Activated B cell treated with CpG ODN at 0.5 μM for 24 hours (primary cell): ENCODE measurements at regions of chr17 and their contacts with region 1.

Region 1: DNA sequence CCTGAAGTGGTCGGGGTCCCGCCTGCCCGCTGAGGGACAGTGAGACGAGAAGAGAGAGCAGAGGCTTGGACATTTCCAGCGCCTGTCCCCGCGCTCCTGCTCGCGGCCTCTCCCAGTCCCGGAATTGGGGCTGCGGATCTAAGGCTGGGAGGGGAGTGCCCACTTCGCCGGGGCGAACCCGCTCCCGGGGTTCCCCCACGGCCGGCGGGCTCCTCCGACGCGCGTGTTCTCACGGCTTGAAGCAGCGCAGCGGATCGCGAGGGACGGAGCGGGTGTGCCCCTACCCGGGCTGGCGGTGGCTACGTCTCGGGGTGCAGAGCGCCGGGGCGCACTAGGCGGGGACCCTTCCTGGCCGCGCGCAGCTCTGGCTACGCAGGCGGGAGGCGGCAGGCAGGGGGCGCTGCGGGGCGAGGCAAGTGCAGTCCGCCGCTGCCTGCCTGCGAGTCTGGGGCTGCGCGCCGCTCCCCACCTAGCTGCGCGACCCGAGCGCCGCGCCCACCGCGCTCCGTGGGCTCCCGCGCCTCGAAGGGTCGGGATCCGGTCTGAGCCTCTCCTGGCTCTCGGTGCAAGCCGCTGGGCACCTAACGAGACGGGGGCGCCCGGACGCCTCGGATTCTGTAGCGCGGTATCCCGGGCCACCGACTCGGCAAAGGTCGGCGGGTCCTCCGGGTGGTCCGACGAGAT is 1.2 kb downstream of the NGFR start:
- DNase-seq: peak; percentile 86
- ATAC-seq: peak; percentile 73
- H3K4me3 Mint-ChIP-seq: peak overlapping the region; percentile 81
- H3K27ac Mint-ChIP-seq: no peak overlapping the region
- H3K4me1 Mint-ChIP-seq: peaks cover 34% of the 10 kb centered on the region
- H3K27me3 Mint-ChIP-seq: peaks cover 33% of the 10 kb centered on the region
- CTCF ChIP-seq: peak; percentile 22

Region 2: DNA sequence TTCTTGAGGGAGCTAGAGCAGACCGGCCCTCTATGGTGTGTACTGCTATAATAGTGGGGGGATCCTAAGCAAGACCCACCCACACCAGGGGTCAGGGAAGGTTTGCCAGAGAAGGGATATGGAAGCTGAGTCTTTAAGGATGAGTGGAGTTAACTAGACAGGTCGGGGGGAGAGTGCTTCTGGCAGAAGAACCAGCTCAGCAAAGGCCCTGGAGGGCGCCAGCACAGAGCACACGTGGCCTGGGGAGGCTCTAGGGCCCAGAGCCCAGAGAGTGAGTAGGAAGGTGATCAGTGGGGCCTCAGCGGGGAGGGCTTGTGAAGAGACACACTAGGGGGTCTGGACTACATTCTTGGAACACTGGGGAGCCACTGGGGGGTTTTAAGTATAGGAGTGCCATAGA is 19.9 kb after region 1 on chr17:
- CTCF ChIA-PET with region 1: no interaction called
- POLR2A ChIA-PET with region 1: no interaction called
- intact Hi-C with region 1: no loop called
- DNase-seq: no peak
- ATAC-seq: no peak
- H3K4me3 Mint-ChIP-seq: no peak overlapping the region
- H3K27ac Mint-ChIP-seq: no peak overlapping the region
- H3K4me1 Mint-ChIP-seq: no peaks in the 10 kb centered on the region
- H3K27me3 Mint-ChIP-seq: peaks cover 7% of the 10 kb centered on the region
- CTCF ChIP-seq: no peak

Region 3: DNA sequence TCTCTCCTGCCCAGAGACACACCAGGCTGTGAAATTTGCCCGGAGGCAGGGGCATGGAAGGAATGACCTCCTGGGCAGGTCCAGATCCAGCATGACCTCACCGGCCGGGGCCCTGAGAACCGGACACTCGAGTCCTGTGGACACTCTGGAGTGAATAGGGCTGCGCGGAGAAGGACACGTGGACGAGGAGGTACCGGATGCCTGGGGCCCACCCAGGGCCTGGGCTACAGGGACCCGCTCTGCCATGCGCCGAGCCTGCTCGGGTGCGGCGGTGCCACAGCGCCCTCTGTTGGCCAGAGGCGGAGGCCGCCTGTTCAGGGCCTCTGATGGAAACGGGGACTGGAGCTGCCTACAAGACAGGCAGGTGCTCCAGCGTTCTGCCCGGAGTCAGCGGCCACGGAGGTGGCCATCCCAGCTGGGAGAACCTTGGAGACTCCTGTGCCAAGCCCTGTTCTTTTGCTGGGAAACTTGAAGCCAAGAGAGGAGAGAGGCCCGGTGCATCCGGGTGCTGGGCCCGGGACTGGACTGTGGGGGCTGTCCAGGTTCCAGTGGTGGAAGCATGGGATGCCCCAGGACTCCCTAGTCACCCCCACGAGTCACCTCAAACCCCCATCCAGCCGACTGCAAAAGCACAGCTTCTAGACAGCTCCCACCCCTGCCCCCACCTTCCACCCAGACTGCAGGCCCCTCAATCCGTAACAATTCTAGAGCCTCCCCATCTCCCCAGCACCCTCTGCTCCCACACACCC is 60.1 kb after region 1 on chr17:
- CTCF ChIA-PET with region 1: interaction called, 22 read pairs
- POLR2A ChIA-PET with region 1: interaction called, 3 read pairs
- intact Hi-C with region 1: loop called (anchors 1 kb)
- DNase-seq: peak; percentile 86
- ATAC-seq: peak; percentile 98
- H3K4me3 Mint-ChIP-seq: no peak overlapping the region
- H3K27ac Mint-ChIP-seq: peak overlapping the region; percentile 35
- H3K4me1 Mint-ChIP-seq: no peaks in the 10 kb centered on the region
- H3K27me3 Mint-ChIP-seq: peaks cover 8% of the 10 kb centered on the region
- CTCF ChIP-seq: peak; percentile 40

Region 4: DNA sequence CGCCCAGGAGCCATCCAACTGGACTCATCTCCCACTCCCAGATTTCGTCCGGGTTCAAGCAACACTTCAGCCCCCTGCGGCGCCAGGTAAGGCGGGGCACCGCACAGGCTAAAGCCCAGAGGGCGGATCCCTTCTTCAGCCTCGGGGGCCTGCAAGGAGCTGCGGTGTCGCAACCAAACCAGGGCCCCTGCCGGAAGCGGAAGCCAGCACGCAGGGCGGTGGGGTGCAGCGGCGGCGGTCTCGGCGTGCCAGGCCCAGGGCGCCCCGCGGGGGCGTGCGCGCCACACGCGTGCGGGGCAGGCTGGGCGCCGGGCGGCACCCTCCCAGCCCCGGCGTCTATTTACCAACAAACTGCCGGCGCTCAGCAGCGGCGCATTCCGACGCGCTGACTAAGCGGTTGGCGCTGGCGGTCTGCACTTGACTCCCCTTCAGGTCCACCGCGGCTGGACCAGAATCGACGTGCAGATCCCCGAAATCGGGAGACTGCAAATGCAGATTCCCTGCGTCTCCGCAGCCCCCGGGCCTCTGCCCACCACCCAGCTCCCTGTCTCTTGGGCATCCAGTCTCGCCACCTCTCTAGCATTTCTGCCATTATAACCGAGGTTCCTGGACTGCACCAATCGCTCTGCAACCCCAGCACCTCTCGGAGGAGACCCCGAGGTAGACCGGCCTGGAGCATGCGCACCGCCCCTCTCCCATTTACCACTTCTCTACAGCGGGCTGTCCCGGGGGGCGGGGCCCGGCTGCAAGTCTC is 472.2 kb after region 1 on chr17:
- CTCF ChIA-PET with region 1: no interaction called
- POLR2A ChIA-PET with region 1: no interaction called
- intact Hi-C with region 1: loop called (anchors 5 kb)
- DNase-seq: peak; percentile 54
- ATAC-seq: peak; percentile 77
- H3K4me3 Mint-ChIP-seq: peak overlapping the region; percentile 87
- H3K27ac Mint-ChIP-seq: peak overlapping the region; percentile 14
- H3K4me1 Mint-ChIP-seq: peaks cover 48% of the 10 kb centered on the region
- H3K27me3 Mint-ChIP-seq: peaks cover 78% of the 10 kb centered on the region
- CTCF ChIP-seq: no peak